Lower leg skin (tissue), 4 donors: ENCODE measurements at regions of chr10 and their contacts with region 1.

Region 1: DNA sequence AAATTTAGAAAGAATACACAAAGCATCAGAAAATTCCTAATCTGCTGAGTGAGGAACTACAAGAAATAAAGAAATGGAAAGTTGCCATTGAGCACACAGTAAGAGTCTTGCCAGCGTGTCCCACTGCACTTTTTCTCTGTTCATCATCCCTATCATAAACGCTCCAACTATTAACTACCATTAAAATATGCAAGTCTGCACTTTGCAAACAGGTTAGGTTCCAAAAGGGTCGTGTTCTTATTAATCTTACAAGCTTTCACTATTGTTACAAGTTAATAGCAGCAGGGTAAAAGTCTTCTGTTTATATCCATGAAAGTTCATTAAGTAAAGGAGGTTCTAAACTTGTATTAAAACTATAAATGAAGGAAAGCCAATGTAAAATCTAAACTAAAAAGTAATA is 5.2 kb upstream of the JMJD1C start:
- DNase-seq: no peak
- H3K4me3 ChIP-seq: no peak overlapping the region
- CTCF ChIP-seq: no peak
- POLR2A ChIP-seq: no peak

Region 2: GRCh38 chr10:64011912-64012714 is 541.2 kb after region 1 on chr10:
- intact Hi-C with region 1: loop called (anchors 5 kb)
- DNase-seq: no peak
- H3K4me3 ChIP-seq: no peak overlapping the region
- CTCF ChIP-seq: no peak
- POLR2A ChIP-seq: no peak